ENCODE measurements at regions of chr4 and their contacts with region 1.

Region 1: GRCh38 chr4:138090150-138090917 is 151.8 kb downstream of the SLC7A11 start:
- DNase-seq: peak; percentile 6 to 31
- ATAC-seq: peak; percentile 80
- H3K4me3 ChIP-seq: peak overlapping the region; percentile 30 to 56 (median 34)
- H3K27ac ChIP-seq: peak overlapping the region in 1 of 4 donors; percentile 25
- H3K4me1 ChIP-seq: peaks cover 17 to 18% of the 10 kb centered on the region in 2 donors
- H3K27me3 ChIP-seq: no peaks in the 10 kb centered on the region
- CTCF ChIP-seq: peak; percentile 60 to 83 (median 73)
- POLR2A ChIP-seq: no peak

Region 2: GRCh38 chr4:137124278-137124932 is 965.9 kb before region 1 on chr4:
- in situ Hi-C with region 1: loop called in 1 of 4 experiments (anchors 10 kb)
- intact Hi-C with region 1: no loop called
- DNase-seq: no peak
- ATAC-seq: peak; percentile 89 to 96
- H3K4me3 ChIP-seq: peak overlapping the region; percentile 34 to 49 (median 36)
- H3K27ac ChIP-seq: no peak overlapping the region
- H3K4me1 ChIP-seq: no peaks in the 10 kb centered on the region
- H3K27me3 ChIP-seq: no peaks in the 10 kb centered on the region
- CTCF ChIP-seq: peak in 4 of 5 experiments; percentile 19 to 54 (median 40)
- POLR2A ChIP-seq: no peak

Region 3: DNA sequence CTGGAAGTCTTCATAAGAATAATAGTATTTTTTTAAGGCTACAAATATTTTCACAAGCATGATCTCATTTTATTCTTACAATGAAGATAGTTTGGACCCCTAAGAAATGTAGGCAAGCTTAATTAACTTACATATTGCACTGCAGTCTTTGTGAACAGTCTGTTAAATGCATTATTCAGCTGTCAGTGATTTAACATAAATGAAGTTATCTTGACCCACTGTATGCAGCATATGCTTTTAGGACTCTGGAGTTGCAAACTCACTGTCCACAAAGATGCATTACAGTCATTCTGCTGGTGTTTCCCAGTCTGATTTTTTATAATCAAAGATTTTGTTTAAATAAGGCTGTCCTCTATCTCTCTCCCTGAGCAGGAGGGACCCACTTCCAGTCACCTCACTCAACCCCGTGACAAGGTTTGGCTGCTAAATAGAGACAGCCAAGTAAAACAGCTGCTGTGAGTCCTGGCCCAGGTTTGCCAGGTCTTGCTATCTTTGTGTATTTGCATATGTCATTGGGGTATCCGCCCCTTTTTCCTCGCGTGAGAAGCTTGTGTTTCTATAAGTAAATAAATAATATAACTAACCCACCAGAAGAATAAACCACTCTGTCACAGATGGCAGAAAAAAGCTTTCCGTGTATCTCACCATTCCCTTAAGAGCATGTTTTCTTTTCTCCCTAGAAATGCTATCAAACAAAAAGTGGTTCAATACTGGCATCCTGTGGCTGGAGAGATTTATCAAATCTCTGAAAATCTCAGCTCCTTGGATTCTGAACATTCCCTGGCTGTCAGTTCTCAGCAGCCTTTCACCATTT is 84.9 kb after region 1 on chr4:
- in situ Hi-C with region 1: no loop called
- intact Hi-C with region 1: loop called (anchors 5 kb)
- DNase-seq: peak in 1 of 2 donors; percentile 16
- ATAC-seq: peak; percentile 58 to 71
- H3K4me3 ChIP-seq: peak overlapping the region in 3 of 4 donors; percentile 12 to 27 (median 14)
- H3K27ac ChIP-seq: no peak overlapping the region
- H3K4me1 ChIP-seq: peaks cover 10% of the 10 kb centered on the region in 2 donors
- H3K27me3 ChIP-seq: no peaks in the 10 kb centered on the region
- CTCF ChIP-seq: no peak
- POLR2A ChIP-seq: no peak

Region 4: DNA sequence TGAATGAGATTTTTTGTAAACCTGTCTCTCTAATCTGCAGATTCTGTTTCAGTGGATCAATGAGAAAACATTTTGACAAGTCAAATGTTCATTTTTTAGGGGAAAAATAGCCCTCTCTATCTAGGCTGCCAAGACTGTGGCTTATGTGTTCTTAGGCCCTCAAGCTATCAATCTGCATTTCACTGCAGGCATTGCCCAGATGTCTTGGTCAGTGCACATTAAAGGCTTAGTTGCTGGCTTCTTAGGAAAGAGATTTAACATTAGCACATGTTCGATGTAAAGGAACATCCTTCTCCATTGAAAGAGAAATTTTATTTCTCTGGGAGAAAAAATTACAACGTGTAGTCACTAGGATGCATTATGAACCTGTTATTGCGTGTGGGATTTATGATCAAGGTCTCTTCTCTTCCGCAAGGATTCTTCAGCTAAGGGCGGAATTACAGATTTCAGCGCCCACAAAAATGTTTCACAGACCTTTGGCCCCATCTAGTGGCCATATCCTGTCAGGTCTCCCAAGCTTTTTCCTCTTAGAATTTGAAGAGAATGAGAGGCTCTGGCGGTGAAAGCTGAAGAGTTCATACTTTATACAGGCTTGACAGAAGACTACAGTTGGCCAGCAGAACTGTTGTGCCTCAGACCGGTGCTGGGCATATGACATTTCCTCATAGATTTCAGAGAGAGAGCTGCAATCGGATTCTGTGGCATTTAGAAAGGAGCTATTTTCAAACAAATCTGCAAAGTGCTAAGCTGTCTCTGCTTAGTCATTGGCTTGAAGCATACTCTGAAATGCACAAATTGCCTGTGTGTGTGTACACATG is 780.6 kb after region 1 on chr4:
- in situ Hi-C with region 1: no loop called
- intact Hi-C with region 1: loop called (anchors 10 kb)
- DNase-seq: peak; percentile 11 to 36
- ATAC-seq: peak; percentile 74 to 84
- H3K4me3 ChIP-seq: no peak overlapping the region
- H3K27ac ChIP-seq: no peak overlapping the region
- H3K4me1 ChIP-seq: peaks cover 3 to 6% of the 10 kb centered on the region in 2 donors
- H3K27me3 ChIP-seq: no peaks in the 10 kb centered on the region
- CTCF ChIP-seq: peak; percentile 74 to 87 (median 83)
- POLR2A ChIP-seq: no peak